ENCODE measurements at regions of chr21 and their contacts with region 1.

Region 1: GRCh38 chr21:16330082-16330907 is 600.5 kb downstream of the USP25 start:
- DNase-seq: peak; percentile 52
- ATAC-seq: peak; percentile 98
- H3K4me3 ChIP-seq: no peak overlapping the region
- H3K27ac ChIP-seq: no peak overlapping the region
- H3K4me1 ChIP-seq: no peaks in the 10 kb centered on the region
- H3K27me3 ChIP-seq: no peaks in the 10 kb centered on the region
- CTCF ChIP-seq: peak; percentile 70
- EP300 ChIP-seq: no peak
- POLR2A ChIP-seq: no peak
- RAD21 ChIP-seq: peak; percentile 30; the same call in 1 of the 2 replicates

Region 2: DNA sequence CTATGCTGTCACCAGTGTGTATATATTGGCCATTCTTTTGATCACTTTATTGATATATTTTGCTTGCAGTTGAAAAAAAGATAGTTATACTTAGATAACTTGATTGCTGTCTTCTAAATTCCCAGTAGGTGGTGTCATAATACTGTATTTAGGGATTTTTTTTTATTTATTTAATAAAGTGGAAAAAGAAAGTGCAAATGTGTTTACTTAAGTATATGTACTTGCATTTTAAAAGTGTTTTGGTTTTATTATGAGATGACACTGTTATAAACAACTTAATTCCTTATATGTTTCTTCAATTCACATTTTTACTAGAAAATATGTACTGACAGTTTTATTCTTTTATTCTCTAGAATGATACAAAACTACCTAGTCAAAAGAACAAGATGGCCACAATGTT is 435.7 kb before region 1 on chr21:
- CTCF ChIA-PET with region 1: interaction called, 8 read pairs
- POLR2A ChIA-PET with region 1: no interaction called
- in situ Hi-C with region 1: loop called (anchors 25 kb)
- intact Hi-C with region 1: loop called (anchors 2 kb)
- DNase-seq: no peak
- ATAC-seq: no peak
- H3K4me3 ChIP-seq: no peak overlapping the region
- H3K27ac ChIP-seq: no peak overlapping the region
- H3K4me1 ChIP-seq: no peaks in the 10 kb centered on the region
- H3K27me3 ChIP-seq: no peaks in the 10 kb centered on the region
- CTCF ChIP-seq: no peak
- EP300 ChIP-seq: no peak
- POLR2A ChIP-seq: no peak
- RAD21 ChIP-seq: no peak

Region 3: DNA sequence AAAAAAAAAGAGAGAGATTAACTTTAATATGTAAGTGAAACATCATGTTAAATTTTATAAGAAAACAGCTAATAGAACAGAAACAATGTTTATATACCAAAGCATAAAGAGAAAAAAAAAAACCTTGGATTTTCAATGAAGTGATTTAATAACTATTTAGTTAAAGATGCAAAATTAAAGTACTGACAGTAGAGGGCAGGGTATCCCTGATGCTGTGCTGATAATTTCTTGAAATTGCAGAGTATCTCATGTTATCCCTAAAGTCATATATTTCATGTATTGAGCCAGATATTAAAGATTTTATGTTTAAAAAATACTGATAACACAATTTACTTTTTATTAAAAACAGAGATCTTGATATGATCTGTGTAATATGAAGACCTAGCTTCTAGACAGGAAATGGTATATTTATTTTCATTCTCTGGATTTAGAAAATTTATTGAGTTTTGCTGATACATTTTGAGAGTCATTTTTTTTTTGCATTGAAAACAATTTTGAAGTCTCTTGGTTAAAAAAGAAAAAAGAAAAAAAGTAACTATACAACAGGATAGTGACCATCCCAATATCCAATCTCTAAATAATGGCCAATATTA is 327.3 kb before region 1 on chr21:
- CTCF ChIA-PET with region 1: no interaction called
- POLR2A ChIA-PET with region 1: no interaction called
- in situ Hi-C with region 1: no loop called
- intact Hi-C with region 1: loop called (anchors 5 kb)
- DNase-seq: no peak
- ATAC-seq: no peak
- H3K4me3 ChIP-seq: no peak overlapping the region
- H3K27ac ChIP-seq: no peak overlapping the region
- H3K4me1 ChIP-seq: no peaks in the 10 kb centered on the region
- H3K27me3 ChIP-seq: no peaks in the 10 kb centered on the region
- CTCF ChIP-seq: no peak
- EP300 ChIP-seq: no peak
- POLR2A ChIP-seq: no peak
- RAD21 ChIP-seq: no peak

Region 4: GRCh38 chr21:16082038-16082816 is 248.1 kb before region 1 on chr21:
- CTCF ChIA-PET with region 1: interaction called, 5 read pairs
- POLR2A ChIA-PET with region 1: no interaction called
- in situ Hi-C with region 1: loop called (anchors 5 kb)
- intact Hi-C with region 1: loop called (anchors 1 kb)
- DNase-seq: no peak
- ATAC-seq: no peak
- H3K4me3 ChIP-seq: no peak overlapping the region
- H3K27ac ChIP-seq: no peak overlapping the region
- H3K4me1 ChIP-seq: peaks cover 10% of the 10 kb centered on the region; the same call in 1 of the 2 replicates
- H3K27me3 ChIP-seq: no peaks in the 10 kb centered on the region
- CTCF ChIP-seq: peak; percentile 11; the same call in 1 of the 2 replicates
- EP300 ChIP-seq: no peak
- POLR2A ChIP-seq: no peak
- RAD21 ChIP-seq: no peak

Region 5: GRCh38 chr21:16342932-16343331 is 12.6 kb after region 1 on chr21:
- CTCF ChIA-PET with region 1: no interaction called
- POLR2A ChIA-PET with region 1: no interaction called
- in situ Hi-C with region 1: no loop called
- intact Hi-C with region 1: loop called (anchors 1 kb)
- DNase-seq: no peak
- ATAC-seq: no peak
- H3K4me3 ChIP-seq: no peak overlapping the region
- H3K27ac ChIP-seq: no peak overlapping the region
- H3K4me1 ChIP-seq: no peaks in the 10 kb centered on the region
- H3K27me3 ChIP-seq: no peaks in the 10 kb centered on the region
- CTCF ChIP-seq: no peak
- EP300 ChIP-seq: no peak
- POLR2A ChIP-seq: no peak
- RAD21 ChIP-seq: no peak

Measured in HepG2 (cell line).